GM13976 (cell line): ENCODE measurements at regions of chr1 and their contacts with region 1.

Region 1: GRCh38 chr1:214264976-214265375 is 16.0 kb upstream of the SMYD2 start:
- DNase-seq: no peak
- CTCF ChIP-seq: no peak

Region 2: DNA sequence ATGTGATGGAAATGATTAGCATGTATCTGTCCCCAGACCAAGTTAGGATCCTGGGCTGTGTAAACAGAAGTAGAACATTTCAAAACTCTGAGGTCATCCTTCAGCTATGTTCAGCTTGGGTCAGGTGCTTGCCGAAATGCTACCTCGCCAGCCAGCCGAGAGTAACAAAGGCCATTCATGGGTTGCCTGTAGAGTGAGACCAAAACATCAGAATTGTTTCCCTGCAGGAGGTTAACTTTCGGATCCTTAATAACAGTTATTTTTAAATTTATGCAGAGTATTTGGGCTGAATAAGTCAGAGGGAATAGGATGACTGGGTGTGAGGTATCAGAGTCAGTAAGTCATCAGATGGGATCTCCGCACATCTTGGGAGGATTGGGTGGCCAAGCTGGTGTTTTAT is 51.6 kb after region 1 on chr1:
- in situ Hi-C with region 1: loop called (anchors 5 kb)
- DNase-seq: no peak
- CTCF ChIP-seq: no peak

Region 3: GRCh38 chr1:214593158-214593557 is 328.2 kb after region 1 on chr1:
- in situ Hi-C with region 1: no loop called
- DNase-seq: no peak
- CTCF ChIP-seq: no peak